AG04449 (cell line): ENCODE measurements at regions of chr3 and their contacts with region 1.

Region 1: GRCh38 chr3:8899986-8900385 is 63.3 kb downstream of the RAD18 start:
- DNase-seq: peak; percentile 49
- H3K4me3 ChIP-seq: no peak overlapping the region
- CTCF ChIP-seq: no peak

Region 2: DNA sequence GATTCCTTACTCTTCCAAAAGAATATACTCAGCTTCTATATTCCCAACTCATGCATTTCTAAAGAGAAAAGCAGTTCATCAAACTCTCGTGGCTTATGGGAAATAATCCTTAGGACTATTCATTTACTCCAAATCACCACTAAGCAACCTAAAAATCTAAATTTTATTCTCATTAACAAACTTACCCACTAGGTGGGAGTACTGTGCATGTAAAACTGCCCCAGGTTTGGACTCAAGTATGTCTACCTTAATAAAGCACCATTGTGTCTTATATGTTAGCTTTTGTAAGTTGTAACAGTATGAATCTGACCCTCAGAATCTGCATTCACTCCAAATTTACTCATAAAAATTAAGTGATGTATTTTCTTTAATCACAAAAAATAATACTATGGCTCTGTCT is 38.0 kb after region 1 on chr3:
- CTCF ChIA-PET with region 1: interaction called, 12 read pairs
- POLR2A ChIA-PET with region 1: no interaction called
- DNase-seq: no peak
- H3K4me3 ChIP-seq: no peak overlapping the region
- CTCF ChIP-seq: peak; percentile 28